Activated CD4-positive, alpha-beta T cell treated with anti-CD3 and anti-CD28 coated beads for 36 hours (primary cell): ENCODE measurements at regions of chr4 and their contacts with region 1.

Region 1: GRCh38 chr4:37397505-37397904 is 153.0 kb downstream of the NWD2 start:
- DNase-seq: no peak
- ATAC-seq: no peak
- H3K4me3 Mint-ChIP-seq: no peak overlapping the region
- H3K27ac Mint-ChIP-seq: no peak overlapping the region
- H3K4me1 Mint-ChIP-seq: peaks cover 13% of the 10 kb centered on the region
- H3K27me3 Mint-ChIP-seq: peaks cover 12% of the 10 kb centered on the region

Region 2: GRCh38 chr4:36414248-36414647 is 983.3 kb before region 1 on chr4:
- CTCF ChIA-PET with region 1: no interaction called
- POLR2A ChIA-PET with region 1: no interaction called
- intact Hi-C with region 1: loop called in 1 of 2 experiments (anchors 5 kb)
- DNase-seq: no peak
- ATAC-seq: no peak
- H3K4me3 Mint-ChIP-seq: no peak overlapping the region
- H3K27ac Mint-ChIP-seq: no peak overlapping the region
- H3K4me1 Mint-ChIP-seq: no peaks in the 10 kb centered on the region
- H3K27me3 Mint-ChIP-seq: peaks cover 27% of the 10 kb centered on the region

Region 3: DNA sequence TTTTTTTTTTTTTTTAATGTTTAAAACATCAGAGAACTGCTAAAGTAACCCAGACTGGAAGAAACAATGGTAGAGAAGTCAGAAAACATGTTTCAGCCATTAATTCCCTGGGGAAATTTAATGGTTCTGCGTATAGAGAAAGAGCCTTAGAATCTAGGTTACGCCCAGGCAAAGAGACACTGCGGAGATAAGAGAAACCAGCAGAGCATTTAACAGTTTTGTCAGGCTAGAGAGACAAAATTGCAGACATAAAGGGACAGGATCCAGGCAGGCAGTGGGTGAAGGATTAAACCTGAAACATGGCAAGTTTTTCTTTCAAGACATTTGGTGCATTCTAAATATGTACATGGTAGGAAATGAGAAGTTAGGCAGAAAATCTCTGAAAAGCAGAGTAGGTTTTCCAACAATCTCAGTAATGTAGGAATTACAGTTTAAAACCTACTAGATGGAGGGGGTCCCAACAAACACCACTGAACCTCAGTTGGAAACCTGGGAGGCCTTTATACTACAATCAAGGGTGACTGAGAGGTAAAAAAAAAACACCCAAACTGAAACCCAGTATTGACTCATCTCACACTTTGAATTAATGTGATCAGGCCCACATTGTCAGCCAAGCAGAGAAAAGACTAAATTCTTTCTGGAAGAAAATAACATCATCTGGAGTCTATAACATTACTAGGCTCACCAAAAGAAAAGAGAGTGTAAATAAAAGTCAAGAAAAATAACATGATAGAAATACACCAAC is 407.2 kb before region 1 on chr4:
- CTCF ChIA-PET with region 1: no interaction called
- POLR2A ChIA-PET with region 1: no interaction called
- intact Hi-C with region 1: no loop called
- DNase-seq: no peak
- ATAC-seq: no peak
- H3K4me3 Mint-ChIP-seq: no peak overlapping the region
- H3K27ac Mint-ChIP-seq: no peak overlapping the region
- H3K4me1 Mint-ChIP-seq: no peaks in the 10 kb centered on the region
- H3K27me3 Mint-ChIP-seq: peaks cover 2% of the 10 kb centered on the region

Region 4: GRCh38 chr4:37124800-37125199 is 272.7 kb before region 1 on chr4:
- CTCF ChIA-PET with region 1: no interaction called
- POLR2A ChIA-PET with region 1: no interaction called
- intact Hi-C with region 1: no loop called
- DNase-seq: no peak
- ATAC-seq: no peak
- H3K4me3 Mint-ChIP-seq: no peak overlapping the region
- H3K27ac Mint-ChIP-seq: no peak overlapping the region
- H3K4me1 Mint-ChIP-seq: no peaks in the 10 kb centered on the region
- H3K27me3 Mint-ChIP-seq: no peaks in the 10 kb centered on the region